ENCODE measurements at regions of chr3 and their contacts with region 1.

Region 1: GRCh38 chr3:133464573-133464972 is 64.7 kb downstream of the BFSP2 start:
- DNase-seq: peak; percentile 73
- H3K4me3 ChIP-seq: no peak overlapping the region
- H3K27ac ChIP-seq: no peak overlapping the region
- H3K4me1 ChIP-seq: no peaks in the 10 kb centered on the region
- H3K27me3 ChIP-seq: no peaks in the 10 kb centered on the region

Region 2: GRCh38 chr3:133152056-133152455 is 312.5 kb before region 1 on chr3:
- in situ Hi-C with region 1: no loop called
- DNase-seq: no peak
- H3K4me3 ChIP-seq: no peak overlapping the region
- H3K27ac ChIP-seq: no peak overlapping the region
- H3K4me1 ChIP-seq: no peaks in the 10 kb centered on the region
- H3K27me3 ChIP-seq: no peaks in the 10 kb centered on the region

Region 3: GRCh38 chr3:133633439-133633838 is 168.9 kb after region 1 on chr3:
- in situ Hi-C with region 1: no loop called
- DNase-seq: no peak
- H3K4me3 ChIP-seq: no peak overlapping the region
- H3K27ac ChIP-seq: no peak overlapping the region
- H3K4me1 ChIP-seq: no peaks in the 10 kb centered on the region
- H3K27me3 ChIP-seq: no peaks in the 10 kb centered on the region

Region 4: DNA sequence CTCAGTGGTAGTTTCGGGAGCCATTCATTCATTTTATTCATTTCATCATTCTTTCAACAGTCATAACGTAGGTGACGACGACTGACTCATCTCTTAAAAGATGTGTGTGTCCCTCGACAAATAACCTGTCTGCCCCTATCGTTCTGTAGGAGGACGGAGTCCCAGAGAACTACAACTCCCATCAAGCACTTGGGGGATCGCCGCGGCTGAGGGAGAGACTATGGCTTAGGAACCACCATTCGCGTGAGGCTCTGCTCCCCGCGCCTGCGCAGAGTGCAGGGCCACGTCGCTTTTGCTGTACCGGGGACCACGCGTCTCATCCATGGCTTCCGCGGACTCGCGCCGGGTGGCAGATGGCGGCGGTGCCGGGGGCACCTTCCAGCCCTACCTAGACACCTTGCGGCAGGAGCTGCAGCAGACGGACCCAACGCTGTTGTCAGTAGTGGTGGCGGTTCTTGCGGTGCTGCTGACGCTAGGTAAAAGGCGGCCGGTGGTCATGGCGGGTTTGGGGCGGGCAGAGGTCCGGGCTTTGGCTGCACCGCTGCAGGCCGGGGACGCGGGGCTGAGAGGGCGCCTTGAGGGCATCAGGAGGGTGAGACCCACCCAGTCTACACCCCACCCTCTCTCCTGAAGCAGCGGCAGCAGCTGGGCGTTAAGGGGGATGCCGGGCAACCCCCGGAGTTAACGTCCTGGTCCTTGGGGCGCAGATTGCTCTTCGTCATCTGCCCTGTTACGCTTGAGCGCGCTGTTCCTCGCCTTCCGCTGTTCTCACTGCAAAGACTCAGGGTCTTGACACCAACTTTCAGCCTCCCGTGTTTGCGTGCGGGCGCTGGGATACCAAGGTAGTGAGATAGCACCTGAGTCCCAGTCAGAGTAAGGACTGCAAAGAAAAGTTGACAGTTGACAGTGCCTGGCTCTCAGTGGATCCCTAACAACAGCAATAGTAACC is 341.2 kb after region 1 on chr3 and contains the start of gene SRPRB:
- in situ Hi-C with region 1: loop called (anchors 25 kb)
- DNase-seq: peak; percentile 96
- H3K4me3 ChIP-seq: peak within 1 kb of the TSS; percentile 95
- H3K27ac ChIP-seq: peak within 1 kb of the TSS; percentile 68
- H3K4me1 ChIP-seq: peaks cover 12% of the 10 kb centered on the region; the same call in 1 of the 2 replicates
- H3K27me3 ChIP-seq: no peaks in the 10 kb centered on the region
- total RNA-seq, gene SRPRB: 82.5 and 110 TPM in 2 replicates